Gastrocnemius medialis (tissue), 4 donors: ENCODE measurements at regions of chr11 and their contacts with region 1.

Region 1: DNA sequence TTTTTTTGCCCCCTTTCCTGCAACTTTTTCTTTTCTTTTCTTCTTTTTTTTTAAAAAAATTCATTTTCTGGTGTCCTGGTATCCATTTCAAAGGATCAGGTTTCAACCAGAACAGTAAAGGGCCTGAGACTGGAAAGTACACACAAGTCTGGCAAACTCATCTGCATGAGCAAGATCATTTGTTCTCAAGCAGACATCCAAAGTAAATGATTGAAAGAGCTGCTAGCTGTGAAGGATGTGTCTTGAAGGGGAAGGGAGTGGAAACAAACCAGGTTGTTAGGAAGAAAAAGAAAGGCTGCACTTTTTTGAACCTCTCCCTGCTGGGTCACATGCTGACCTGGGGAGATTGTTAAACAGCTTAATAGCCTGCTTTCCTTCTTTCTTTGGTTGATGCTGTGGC is 5.3 kb downstream of the YAP1 start:
- DNase-seq: no peak
- ATAC-seq: no peak
- H3K4me3 ChIP-seq: no peak overlapping the region
- H3K27ac ChIP-seq: peak overlapping the region; percentile 30 to 99 (median 37)
- H3K4me1 ChIP-seq: peaks cover 71 to 77% of the 10 kb centered on the region in 2 donors
- H3K27me3 ChIP-seq: no peaks in the 10 kb centered on the region
- CTCF ChIP-seq: no peak
- POLR2A ChIP-seq: no peak

Region 2: GRCh38 chr11:101346591-101346990 is 769.0 kb before region 1 on chr11:
- in situ Hi-C with region 1: no loop called
- intact Hi-C with region 1: no loop called
- DNase-seq: no peak
- ATAC-seq: no peak
- H3K4me3 ChIP-seq: no peak overlapping the region
- H3K27ac ChIP-seq: no peak overlapping the region
- H3K4me1 ChIP-seq: no peaks in the 10 kb centered on the region
- H3K27me3 ChIP-seq: no peaks in the 10 kb centered on the region
- CTCF ChIP-seq: no peak
- POLR2A ChIP-seq: no peak

Region 3: DNA sequence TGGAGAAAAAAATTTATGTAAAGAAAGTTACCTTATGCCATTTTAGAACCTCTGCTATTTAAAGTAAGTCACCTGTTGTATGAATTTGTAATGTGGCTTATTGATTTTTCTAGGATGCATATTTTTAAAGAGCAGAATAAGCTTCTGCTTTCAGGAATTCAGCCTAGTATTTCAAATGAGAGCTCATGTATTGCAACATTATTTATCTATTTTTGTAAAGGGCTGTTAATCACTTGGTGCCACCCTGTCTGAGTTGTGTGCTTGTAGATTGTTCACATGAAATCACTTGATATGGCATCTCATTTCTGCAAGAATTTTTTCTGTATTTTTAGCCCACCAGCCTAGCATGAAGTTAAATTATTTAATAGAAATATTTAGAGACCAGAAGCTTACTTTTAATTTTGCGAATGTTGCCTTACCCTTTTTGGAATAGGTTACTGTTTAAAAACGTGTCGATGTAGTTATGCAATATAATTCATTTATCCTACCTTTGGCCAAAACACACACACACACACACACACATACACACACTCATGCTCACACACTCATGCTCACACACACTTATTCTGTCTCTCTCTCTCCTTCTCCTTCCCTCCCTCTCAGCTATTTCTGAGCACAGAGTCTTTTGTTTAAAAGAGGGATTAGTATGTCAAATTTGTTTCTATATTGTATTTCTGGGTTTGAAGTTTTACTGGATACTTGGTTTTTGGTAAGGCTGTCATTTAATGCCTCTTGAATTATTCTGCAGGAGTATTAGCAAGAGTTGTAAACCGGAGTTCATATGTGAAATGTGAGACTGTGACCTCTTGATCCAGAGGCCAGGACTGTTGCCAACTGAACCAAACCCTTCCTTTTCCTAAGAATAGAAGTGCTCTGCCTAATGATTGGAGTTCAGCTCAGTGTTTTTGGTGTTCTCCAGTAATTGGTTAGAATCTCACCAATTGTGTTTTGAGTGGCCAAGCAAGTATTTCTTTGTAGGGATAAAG is 29.1 kb after region 1 on chr11:
- in situ Hi-C with region 1: no loop called
- intact Hi-C with region 1: loop called (anchors 2 kb)
- DNase-seq: peak; percentile 55 to 76
- ATAC-seq: peak; percentile 89 to 93
- H3K4me3 ChIP-seq: peak overlapping the region in 1 of 4 donors; percentile 24
- H3K27ac ChIP-seq: peak overlapping the region; percentile 74 to 86 (median 83)
- H3K4me1 ChIP-seq: peaks cover 44 to 83% of the 10 kb centered on the region in 2 donors
- H3K27me3 ChIP-seq: no peaks in the 10 kb centered on the region
- CTCF ChIP-seq: no peak
- POLR2A ChIP-seq: no peak